ENCODE measurements at regions of chr11 and their contacts with region 1.

Region 1: DNA sequence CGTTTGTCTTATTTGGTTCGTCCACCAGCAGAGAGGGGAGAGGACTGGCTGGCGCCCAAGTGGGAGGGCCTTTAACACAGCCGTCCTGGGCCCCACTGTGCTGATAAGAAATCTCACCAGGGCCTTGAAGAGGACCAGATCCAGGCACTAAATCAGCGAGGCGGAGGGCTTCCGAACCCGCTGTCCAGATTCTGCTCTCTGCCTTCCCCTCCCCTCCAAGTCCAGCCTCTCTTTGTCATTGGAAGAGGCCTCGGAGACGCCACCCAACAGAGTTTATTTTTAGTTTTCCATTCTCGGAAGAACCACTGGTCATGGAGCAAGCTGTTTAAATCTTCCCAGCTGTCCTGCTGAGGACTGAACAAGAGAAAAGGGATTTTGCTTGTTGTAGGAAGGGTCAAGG is 9.3 kb upstream of the FXYD6 start:
- DNase-seq: peak; percentile 89
- ATAC-seq: peak; percentile 94

Region 2: GRCh38 chr11:117851106-117851505 is 34.7 kb before region 1 on chr11:
- intact Hi-C with region 1: loop called (anchors 5 kb)
- DNase-seq: no peak
- ATAC-seq: peak; percentile 55

Region 3: DNA sequence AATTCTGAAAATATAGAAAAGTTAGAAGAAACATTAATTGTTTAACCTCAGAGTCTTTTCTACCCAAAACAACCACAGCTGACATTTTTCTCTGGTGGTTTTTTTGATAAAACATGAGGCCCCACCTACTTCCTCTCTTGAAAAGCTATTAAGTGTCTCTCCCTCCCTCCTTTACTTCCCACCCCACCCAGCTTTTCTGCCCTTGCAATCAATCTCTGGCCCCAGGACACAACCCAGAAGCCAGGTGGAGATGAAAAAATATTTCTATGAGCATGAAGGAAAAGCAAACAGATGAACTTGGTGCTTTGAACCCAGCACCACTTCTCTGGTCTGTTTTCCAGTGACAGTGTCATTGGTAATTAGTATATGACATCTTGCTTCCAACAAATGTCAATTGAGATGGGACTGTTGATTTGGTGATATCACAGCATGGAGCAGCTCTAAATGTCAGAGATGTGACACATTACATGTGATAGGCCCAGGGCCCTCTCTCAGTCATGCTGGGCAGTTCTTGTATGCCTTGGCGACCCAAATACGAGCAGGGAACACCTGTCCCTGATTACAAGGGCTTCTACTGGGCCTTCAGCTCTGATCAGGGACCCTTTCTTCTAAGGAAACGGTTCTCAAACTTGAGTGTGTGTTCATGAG is 67.4 kb after region 1 on chr11:
- intact Hi-C with region 1: no loop called
- DNase-seq: no peak
- ATAC-seq: no peak

Measured in Right ventricle myocardium inferior (tissue), 1 donor.